H1 (cell line): ENCODE measurements at regions of chr19 and their contacts with region 1.

Region 1: GRCh38 chr19:33241530-33242101 is 16.0 kb upstream of the SLC7A10 start:
- DNase-seq: peak in 1 of 2 experiments; percentile 72
- H3K4me3 ChIP-seq: no peak overlapping the region
- H3K27ac ChIP-seq: no peak overlapping the region
- H3K4me1 ChIP-seq: no peaks in the 10 kb centered on the region
- H3K27me3 ChIP-seq: no peaks in the 10 kb centered on the region; a peak in 1 of 7 replicates
- CTCF ChIP-seq: peak; percentile 63 to 72 (median 64)
- EP300 ChIP-seq: no peak
- POLR2A ChIP-seq: no peak
- RAD21 ChIP-seq: peak; percentile 85

Region 2: DNA sequence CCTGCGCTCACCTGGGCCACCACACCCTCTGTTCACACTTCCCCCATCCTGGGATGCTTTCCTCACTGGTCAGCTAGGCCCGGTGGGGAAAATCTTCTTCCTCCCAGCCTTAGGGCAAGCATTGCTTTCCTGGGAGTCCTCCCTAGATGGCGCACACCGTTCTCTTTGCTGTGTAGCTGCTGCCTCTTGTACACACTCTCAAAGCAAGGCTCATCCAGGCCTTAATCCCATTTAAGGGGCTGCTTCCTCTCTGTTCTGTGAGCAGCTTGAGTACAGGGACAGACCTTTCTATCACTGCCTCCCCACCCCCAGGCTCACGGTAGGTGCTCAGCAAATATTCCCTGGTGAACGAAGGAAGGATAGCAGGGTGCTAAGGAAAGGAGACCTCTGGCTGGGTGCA is 27.0 kb before region 1 on chr19:
- CTCF ChIA-PET with region 1: no interaction called
- POLR2A ChIA-PET with region 1: no interaction called
- DNase-seq: no peak
- H3K4me3 ChIP-seq: no peak overlapping the region
- H3K27ac ChIP-seq: no peak overlapping the region
- H3K4me1 ChIP-seq: peaks cover 0 to 2% (median under 1%) of the 10 kb centered on the region in 4 experiments; a peak in 3 of 7 replicates
- H3K27me3 ChIP-seq: no peaks in the 10 kb centered on the region
- CTCF ChIP-seq: peak; percentile 56 to 77 (median 58)
- EP300 ChIP-seq: no peak
- POLR2A ChIP-seq: no peak
- RAD21 ChIP-seq: peak; percentile 46 to 54

Region 3: GRCh38 chr19:33254245-33254824 is 12.7 kb after region 1 on chr19:
- CTCF ChIA-PET with region 1: interaction called, 23 read pairs
- POLR2A ChIA-PET with region 1: interaction called, 3 read pairs
- DNase-seq: no peak
- H3K4me3 ChIP-seq: no peak overlapping the region
- H3K27ac ChIP-seq: no peak overlapping the region
- H3K4me1 ChIP-seq: peaks cover 0 to 4% (median under 1%) of the 10 kb centered on the region in 4 experiments; a peak in 4 of 7 replicates
- H3K27me3 ChIP-seq: no peaks in the 10 kb centered on the region; a peak in 1 of 7 replicates
- CTCF ChIP-seq: no peak
- EP300 ChIP-seq: no peak
- POLR2A ChIP-seq: no peak
- RAD21 ChIP-seq: no peak

Region 4: GRCh38 chr19:33260628-33261418 is 19.2 kb after region 1 on chr19:
- CTCF ChIA-PET with region 1: interaction called, 23 read pairs
- POLR2A ChIA-PET with region 1: no interaction called
- DNase-seq: no peak
- H3K4me3 ChIP-seq: no peak overlapping the region
- H3K27ac ChIP-seq: no peak overlapping the region
- H3K4me1 ChIP-seq: peaks cover 0 to 7% (median 0%) of the 10 kb centered on the region in 4 experiments; a peak in 1 of 7 replicates
- H3K27me3 ChIP-seq: no peaks in the 10 kb centered on the region
- CTCF ChIP-seq: no peak
- EP300 ChIP-seq: no peak
- POLR2A ChIP-seq: no peak
- RAD21 ChIP-seq: no peak

Region 5: GRCh38 chr19:33268162-33268991 is 26.8 kb after region 1 on chr19:
- CTCF ChIA-PET with region 1: interaction called, 16 read pairs
- POLR2A ChIA-PET with region 1: no interaction called
- DNase-seq: no peak
- H3K4me3 ChIP-seq: no peak overlapping the region
- H3K27ac ChIP-seq: no peak overlapping the region
- H3K4me1 ChIP-seq: peaks cover 0 to 3% (median 2%) of the 10 kb centered on the region in 4 experiments; a peak in 5 of 7 replicates
- H3K27me3 ChIP-seq: no peaks in the 10 kb centered on the region
- CTCF ChIP-seq: no peak
- EP300 ChIP-seq: no peak
- POLR2A ChIP-seq: no peak
- RAD21 ChIP-seq: no peak